ENCODE measurements at regions of chr15 and their contacts with region 1.

Region 1: GRCh38 chr15:36501063-36501678 is 78.3 kb upstream of the CDIN1 start:
- DNase-seq: peak in 4 of 5 donors; percentile 7 to 11 (median 10)
- H3K4me3 ChIP-seq: no peak overlapping the region
- H3K4me3 Mint-ChIP-seq: no peak overlapping the region
- H3K27ac ChIP-seq: no peak overlapping the region
- H3K27ac Mint-ChIP-seq: no peak overlapping the region
- H3K4me1 ChIP-seq: no peaks in the 10 kb centered on the region
- H3K4me1 Mint-ChIP-seq: peaks cover 0 to 2% (median 0%) of the 10 kb centered on the region in 4 donors
- H3K27me3 ChIP-seq: no peaks in the 10 kb centered on the region
- H3K27me3 Mint-ChIP-seq: peaks cover 3 to 6% of the 10 kb centered on the region in 2 donors

Region 2: GRCh38 chr15:35827141-35827540 is 674.0 kb before region 1 on chr15:
- CTCF ChIA-PET with region 1: no interaction called
- POLR2A ChIA-PET with region 1: no interaction called
- intact Hi-C with region 1: no loop called
- DNase-seq: no peak
- H3K4me3 ChIP-seq: no peak overlapping the region
- H3K4me3 Mint-ChIP-seq: no peak overlapping the region
- H3K27ac ChIP-seq: no peak overlapping the region
- H3K27ac Mint-ChIP-seq: no peak overlapping the region
- H3K4me1 ChIP-seq: no peaks in the 10 kb centered on the region
- H3K4me1 Mint-ChIP-seq: no peaks in the 10 kb centered on the region
- H3K27me3 ChIP-seq: no peaks in the 10 kb centered on the region
- H3K27me3 Mint-ChIP-seq: peaks cover 0 to 4% of the 10 kb centered on the region in 2 donors

Region 3: GRCh38 chr15:37134699-37135131 is 633.5 kb after region 1 on chr15:
- CTCF ChIA-PET with region 1: no interaction called
- POLR2A ChIA-PET with region 1: no interaction called
- intact Hi-C with region 1: loop called (anchors 5 kb)
- DNase-seq: no peak
- H3K4me3 ChIP-seq: no peak overlapping the region
- H3K4me3 Mint-ChIP-seq: no peak overlapping the region
- H3K27ac ChIP-seq: no peak overlapping the region
- H3K27ac Mint-ChIP-seq: no peak overlapping the region
- H3K4me1 ChIP-seq: no peaks in the 10 kb centered on the region
- H3K4me1 Mint-ChIP-seq: no peaks in the 10 kb centered on the region
- H3K27me3 ChIP-seq: no peaks in the 10 kb centered on the region
- H3K27me3 Mint-ChIP-seq: peaks cover 0 to 10% of the 10 kb centered on the region in 2 donors